T-cell (primary cell): ENCODE measurements at regions of chr10 and their contacts with region 1.

Region 1: DNA sequence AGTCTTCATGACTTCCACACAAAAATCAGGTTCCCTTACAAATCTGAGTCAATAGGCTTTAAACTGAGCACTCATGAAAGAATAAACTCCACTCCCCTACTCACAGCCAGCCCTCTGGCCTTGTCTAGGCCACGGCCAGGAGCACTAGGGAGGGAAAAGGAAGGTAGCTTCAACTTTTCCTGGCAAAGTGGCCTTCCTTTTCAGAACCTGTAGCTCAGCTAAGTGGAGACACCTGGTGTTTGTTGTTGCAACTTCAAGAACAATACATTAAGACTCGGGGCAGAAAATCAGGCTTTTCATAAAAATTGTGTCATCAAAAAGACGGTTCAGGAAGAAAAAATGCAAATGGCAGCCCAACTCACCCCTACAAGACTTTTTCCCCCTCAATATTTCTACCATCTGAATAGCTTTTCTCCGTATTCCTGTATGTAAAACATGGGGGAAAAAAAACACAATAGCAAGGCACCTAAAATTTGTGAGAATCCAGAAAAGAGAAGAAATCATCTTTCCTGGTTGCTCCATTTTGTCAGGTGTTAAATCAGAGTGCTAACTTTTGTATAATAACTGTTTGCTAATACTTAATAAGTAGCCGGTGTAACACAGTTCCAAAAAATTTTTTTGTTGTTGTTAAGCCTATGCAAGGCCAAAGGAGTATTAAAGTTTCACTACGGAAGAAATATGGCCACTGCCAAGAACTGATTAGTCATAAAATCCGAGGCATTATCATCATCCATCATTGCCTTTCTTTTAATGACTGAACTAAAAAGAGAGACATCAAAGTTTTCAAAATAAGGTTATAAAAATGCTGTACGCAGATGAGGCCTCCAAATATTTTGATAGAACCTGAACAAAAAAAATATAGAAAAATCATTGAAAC is 66.2 kb upstream of the ARID5B start:
- DNase-seq: peak in 2 of 35 experiments; percentile 0 to 43
- ATAC-seq: no peak
- H3K4me3 ChIP-seq: no peak overlapping the region
- H3K4me3 Mint-ChIP-seq: no peak overlapping the region
- H3K27ac ChIP-seq: no peak overlapping the region
- H3K27ac Mint-ChIP-seq: peak overlapping the region in 1 of 2 donors; percentile 10
- H3K4me1 ChIP-seq: peaks cover 0 to 11% of the 10 kb centered on the region in 2 experiments
- H3K4me1 Mint-ChIP-seq: peaks cover 14 to 17% (median 16%) of the 10 kb centered on the region in 3 donors
- H3K27me3 ChIP-seq: no peaks in the 10 kb centered on the region
- H3K27me3 Mint-ChIP-seq: no peaks in the 10 kb centered on the region

Region 2: DNA sequence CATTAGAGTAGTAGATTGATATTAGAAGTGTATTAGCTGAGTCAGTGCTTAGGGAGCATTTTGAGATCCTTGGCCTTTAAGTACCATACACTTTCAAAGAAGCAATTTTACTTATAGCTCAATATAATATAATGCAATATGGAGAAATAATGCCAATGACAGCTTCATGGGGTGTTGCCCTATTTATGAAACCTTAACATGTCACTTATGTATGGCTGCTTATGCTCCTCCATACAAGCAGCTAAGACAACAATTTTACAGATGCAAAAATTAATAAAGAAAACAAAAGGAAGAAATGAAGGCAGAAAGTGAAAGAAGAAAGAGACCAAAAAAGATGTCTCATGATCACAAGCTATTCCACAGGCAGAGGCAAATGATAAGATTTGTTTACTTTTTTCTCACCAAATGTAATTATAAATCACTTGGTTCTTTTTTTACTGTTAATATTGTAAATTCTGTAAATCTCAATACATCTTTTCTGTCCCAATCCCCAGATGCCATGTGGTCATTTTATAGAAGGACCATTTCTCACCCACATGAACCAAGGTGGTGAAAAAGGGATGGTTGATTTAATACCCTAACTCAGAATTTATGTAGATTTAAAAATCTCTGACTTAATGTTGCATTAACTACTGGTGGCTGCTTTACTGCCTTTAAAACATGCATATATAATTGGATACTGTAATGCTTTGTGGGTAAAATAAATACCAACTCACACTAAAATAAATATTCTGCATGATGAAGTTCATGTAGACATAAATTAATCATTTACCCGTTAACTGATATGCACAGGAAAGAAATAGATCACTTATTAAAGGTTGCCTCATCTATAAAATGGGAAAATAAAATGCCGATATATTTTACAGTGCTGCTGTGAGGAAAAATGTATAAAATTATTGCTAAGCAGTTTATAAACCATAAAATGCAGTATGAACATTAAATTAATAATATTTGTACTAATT is 857.9 kb before region 1 on chr10:
- CTCF ChIA-PET with region 1: no interaction called
- POLR2A ChIA-PET with region 1: interaction called in 1 of 2 experiments, 13 read pairs
- DNase-seq: no peak
- ATAC-seq: no peak
- H3K4me3 ChIP-seq: no peak overlapping the region
- H3K4me3 Mint-ChIP-seq: no peak overlapping the region
- H3K27ac ChIP-seq: no peak overlapping the region
- H3K27ac Mint-ChIP-seq: no peak overlapping the region
- H3K4me1 ChIP-seq: no peaks in the 10 kb centered on the region
- H3K4me1 Mint-ChIP-seq: no peaks in the 10 kb centered on the region
- H3K27me3 ChIP-seq: no peaks in the 10 kb centered on the region
- H3K27me3 Mint-ChIP-seq: peaks cover 5 to 10% of the 10 kb centered on the region in 2 donors

Region 3: DNA sequence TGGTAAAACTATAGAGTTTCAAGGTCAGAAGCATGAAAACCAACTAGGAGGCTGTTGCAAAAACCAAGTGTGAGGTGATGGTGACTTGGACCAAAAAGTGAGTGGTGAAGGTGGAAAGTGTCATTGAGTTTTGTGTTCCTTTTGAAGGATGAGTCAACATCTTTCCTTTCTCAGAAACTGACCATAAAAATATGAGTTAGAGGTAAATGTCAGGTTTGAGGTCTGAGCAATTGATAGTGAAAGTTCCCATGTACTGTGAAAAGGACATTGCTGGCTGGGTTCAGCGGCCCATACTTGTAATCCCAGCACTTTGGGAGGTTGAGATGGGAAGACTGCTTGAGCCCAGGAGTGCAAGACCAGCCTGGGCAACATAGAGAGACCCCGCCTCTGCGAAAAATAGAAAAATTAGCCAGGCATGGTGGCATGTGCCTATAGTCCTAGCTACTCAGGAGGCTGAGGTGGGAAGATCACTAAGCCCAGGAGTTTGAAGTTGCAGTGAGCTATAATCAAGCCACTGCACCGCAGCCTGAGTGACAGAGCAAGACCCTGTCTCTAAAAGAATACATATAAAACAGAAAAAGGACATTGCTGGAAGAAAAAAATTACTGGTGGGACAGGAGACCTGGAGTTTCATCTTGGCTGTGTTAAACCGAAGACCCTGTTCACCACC is 23.1 kb before region 1 on chr10:
- CTCF ChIA-PET with region 1: no interaction called
- POLR2A ChIA-PET with region 1: no interaction called
- DNase-seq: no peak
- ATAC-seq: no peak
- H3K4me3 ChIP-seq: no peak overlapping the region
- H3K4me3 Mint-ChIP-seq: no peak overlapping the region
- H3K27ac ChIP-seq: no peak overlapping the region
- H3K27ac Mint-ChIP-seq: no peak overlapping the region
- H3K4me1 ChIP-seq: no peaks in the 10 kb centered on the region
- H3K4me1 Mint-ChIP-seq: no peaks in the 10 kb centered on the region
- H3K27me3 ChIP-seq: no peaks in the 10 kb centered on the region
- H3K27me3 Mint-ChIP-seq: no peaks in the 10 kb centered on the region